Right ventricle myocardium superior (tissue), 1 donor: ENCODE measurements at regions of chr18 and their contacts with region 1.

Region 1: DNA sequence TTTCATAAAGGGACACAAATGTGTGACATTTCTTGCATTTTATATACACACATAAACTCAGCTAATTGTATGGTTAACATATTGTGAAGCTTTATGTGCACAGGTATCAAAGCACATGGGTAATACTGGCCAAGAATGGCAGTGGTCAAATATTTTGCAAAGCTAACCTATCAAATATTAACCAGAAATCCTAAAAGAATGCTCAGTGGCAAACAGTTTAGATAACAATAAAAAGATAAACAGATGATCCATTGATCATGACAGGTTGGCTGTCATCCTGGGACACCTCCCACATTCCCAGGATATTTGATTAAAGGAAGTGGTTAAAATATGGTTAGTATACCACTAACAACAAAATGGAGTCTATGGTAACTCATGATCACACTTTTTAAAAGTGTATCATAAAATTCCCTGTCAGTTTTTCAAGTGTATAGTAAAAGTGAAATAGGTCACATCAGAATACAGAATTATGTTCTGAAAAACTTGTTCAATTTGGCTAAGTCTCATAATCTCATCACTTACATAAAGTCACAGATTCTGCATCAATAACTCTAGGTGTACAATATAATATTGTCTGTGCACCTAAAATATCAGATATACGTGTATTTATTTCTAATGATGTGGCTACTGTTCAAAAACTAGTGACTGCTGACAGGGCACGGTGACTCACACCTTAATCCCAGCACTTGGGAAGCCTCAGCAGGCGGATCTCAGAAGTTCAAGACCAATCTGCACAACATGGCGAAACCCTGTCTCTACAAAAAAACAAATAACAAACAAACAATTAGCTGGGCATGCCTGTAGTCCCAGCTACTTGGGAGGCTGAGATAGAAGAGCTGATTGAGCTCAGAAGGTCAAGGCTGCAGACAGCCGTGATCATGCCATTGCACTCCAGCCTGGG is 48.9 kb downstream of the CDH2 start:
- DNase-seq: no peak
- ATAC-seq: peak; percentile 20

Region 2: GRCh38 chr18:27713738-27714095 is 414.3 kb before region 1 on chr18:
- intact Hi-C with region 1: no loop called
- DNase-seq: no peak
- ATAC-seq: no peak

Region 3: GRCh38 chr18:28167835-28168349 is 39.9 kb after region 1 on chr18:
- intact Hi-C with region 1: loop called (anchors 5 kb)
- DNase-seq: no peak
- ATAC-seq: no peak